Right ventricle myocardium superior (tissue), 1 donor: ENCODE measurements at regions of chr4 and their contacts with region 1.

Region 1: DNA sequence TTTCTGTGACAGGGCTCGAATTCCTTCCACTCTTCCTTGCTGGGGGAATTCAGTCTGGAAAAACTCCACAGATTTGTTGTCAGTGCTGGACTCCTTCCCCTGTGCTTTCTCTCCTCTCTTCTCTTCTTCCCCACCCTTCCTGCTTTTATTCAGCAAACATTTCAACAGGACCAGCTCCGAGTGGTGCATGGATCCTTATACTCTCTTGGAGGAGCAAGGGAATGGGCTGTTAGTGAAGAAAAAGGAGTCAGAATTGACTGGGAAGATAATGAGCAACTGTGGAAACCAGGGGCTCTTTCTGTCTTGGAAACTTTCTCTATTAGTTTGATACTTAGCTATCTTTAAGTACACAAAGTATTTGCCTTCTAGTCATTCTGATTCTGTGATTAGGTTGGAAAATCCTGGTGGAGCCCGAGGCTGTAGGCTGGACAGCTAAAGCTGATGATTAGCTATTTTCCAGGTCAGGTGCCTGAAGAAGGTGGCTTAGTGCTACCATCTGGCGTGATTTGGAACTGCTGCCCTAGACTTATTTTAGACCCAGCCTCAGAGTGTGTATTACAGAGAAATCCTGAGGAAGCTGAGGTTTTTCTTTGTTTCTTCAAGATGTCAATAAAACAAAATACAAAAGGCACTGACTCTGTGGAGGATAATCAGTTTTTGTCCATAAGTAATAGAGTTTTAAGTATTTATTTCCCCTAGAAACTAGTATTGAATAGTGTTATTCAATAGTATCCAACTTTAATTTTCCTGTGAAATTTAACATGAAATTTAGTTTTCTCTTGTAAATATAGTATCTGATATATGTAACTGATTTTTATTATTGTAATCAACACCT is 38.4 kb downstream of the NAP1L5 start:
- DNase-seq: no peak
- ATAC-seq: peak; percentile 97

Region 2: GRCh38 chr4:88533937-88534750 is 125.1 kb before region 1 on chr4:
- intact Hi-C with region 1: loop called (anchors 2 kb)
- DNase-seq: no peak
- ATAC-seq: no peak

Region 3: GRCh38 chr4:88591787-88592599 is 67.3 kb before region 1 on chr4 and contains the start of gene HERC3:
- intact Hi-C with region 1: loop called (anchors 5 kb)
- DNase-seq: peak; percentile 96
- ATAC-seq: peak; percentile 98
- total RNA-seq, gene HERC3: 49.7 TPM